HCT116 (cell line): ENCODE measurements at regions of chr6 and their contacts with region 1.

Region 1: DNA sequence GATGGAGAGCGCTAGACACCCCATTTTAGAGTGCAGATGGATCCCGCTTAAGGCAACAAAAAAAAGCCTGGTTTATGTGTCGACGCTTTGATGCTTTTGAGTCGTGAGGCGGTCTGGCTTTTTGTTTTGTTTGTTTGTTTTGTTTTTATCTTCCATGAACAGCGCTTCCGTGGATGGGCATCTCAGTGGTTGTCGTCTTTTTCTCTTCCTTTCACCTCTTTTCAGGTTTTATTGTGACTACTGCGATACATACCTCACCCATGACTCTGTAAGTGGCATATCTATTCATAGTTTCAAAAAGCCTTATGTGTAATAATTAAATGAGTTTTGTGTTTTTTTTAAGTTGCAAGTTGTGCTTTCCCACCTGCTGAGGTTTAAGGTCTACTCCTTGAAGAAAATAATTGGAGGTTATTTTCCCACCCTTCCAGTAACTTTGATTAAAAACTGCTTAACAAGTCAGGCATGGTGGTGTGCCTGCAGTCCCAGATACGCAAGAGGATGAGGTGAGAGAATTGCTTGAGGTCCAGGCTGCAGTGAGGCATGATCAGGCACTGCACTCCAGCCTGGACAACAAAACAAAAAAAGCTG is 476 bp downstream of the SNRPC start:
- DNase-seq: no peak
- ATAC-seq: peak; percentile 16; the same call in 1 of the 2 replicates
- H3K4me3 ChIP-seq: peak overlapping the region; percentile 73 to 98
- H3K27ac ChIP-seq: peak overlapping the region; percentile 87
- H3K4me1 ChIP-seq: peaks cover 4 to 8% of the 10 kb centered on the region in 2 experiments; a peak in 3 of 4 replicates
- H3K27me3 ChIP-seq: no peaks in the 10 kb centered on the region
- CTCF ChIP-seq: no peak
- POLR2A ChIP-seq: no peak
- RAD21 ChIP-seq: no peak

Region 2: GRCh38 chr6:33926451-33926850 is 831.3 kb before region 1 on chr6:
- CTCF ChIA-PET with region 1: no interaction called
- POLR2A ChIA-PET with region 1: no interaction called
- RAD21 ChIA-PET with region 1: no interaction called
- intact Hi-C with region 1: no loop called
- DNase-seq: peak; percentile 52
- ATAC-seq: peak; percentile 96
- H3K4me3 ChIP-seq: no peak overlapping the region
- H3K27ac ChIP-seq: no peak overlapping the region
- H3K4me1 ChIP-seq: peaks cover 0 to 4% of the 10 kb centered on the region in 2 experiments; a peak in 1 of 4 replicates
- H3K27me3 ChIP-seq: no peaks in the 10 kb centered on the region
- CTCF ChIP-seq: no peak
- POLR2A ChIP-seq: no peak
- RAD21 ChIP-seq: no peak

Region 3: GRCh38 chr6:34459899-34460593 is 297.7 kb before region 1 on chr6:
- CTCF ChIA-PET with region 1: no interaction called
- POLR2A ChIA-PET with region 1: no interaction called
- RAD21 ChIA-PET with region 1: no interaction called
- intact Hi-C with region 1: loop called (anchors 1 kb)
- DNase-seq: peak; percentile 70
- ATAC-seq: peak; percentile 56
- H3K4me3 ChIP-seq: no peak overlapping the region
- H3K27ac ChIP-seq: no peak overlapping the region
- H3K4me1 ChIP-seq: peaks cover 8 to 35% of the 10 kb centered on the region in 2 experiments
- H3K27me3 ChIP-seq: no peaks in the 10 kb centered on the region
- CTCF ChIP-seq: peak; percentile 68 to 85 (median 85)
- POLR2A ChIP-seq: no peak
- RAD21 ChIP-seq: peak; percentile 97

Region 4: GRCh38 chr6:34638834-34639736 is 118.7 kb before region 1 on chr6:
- CTCF ChIA-PET with region 1: no interaction called
- POLR2A ChIA-PET with region 1: interaction called, 3 read pairs
- RAD21 ChIA-PET with region 1: no interaction called
- intact Hi-C with region 1: loop called (anchors 10 kb)
- DNase-seq: no peak
- ATAC-seq: no peak
- H3K4me3 ChIP-seq: no peak overlapping the region
- H3K27ac ChIP-seq: no peak overlapping the region
- H3K4me1 ChIP-seq: peaks cover 0 to 11% of the 10 kb centered on the region in 2 experiments; a peak in 3 of 4 replicates
- H3K27me3 ChIP-seq: no peaks in the 10 kb centered on the region
- CTCF ChIP-seq: no peak
- POLR2A ChIP-seq: no peak
- RAD21 ChIP-seq: no peak

Region 5: DNA sequence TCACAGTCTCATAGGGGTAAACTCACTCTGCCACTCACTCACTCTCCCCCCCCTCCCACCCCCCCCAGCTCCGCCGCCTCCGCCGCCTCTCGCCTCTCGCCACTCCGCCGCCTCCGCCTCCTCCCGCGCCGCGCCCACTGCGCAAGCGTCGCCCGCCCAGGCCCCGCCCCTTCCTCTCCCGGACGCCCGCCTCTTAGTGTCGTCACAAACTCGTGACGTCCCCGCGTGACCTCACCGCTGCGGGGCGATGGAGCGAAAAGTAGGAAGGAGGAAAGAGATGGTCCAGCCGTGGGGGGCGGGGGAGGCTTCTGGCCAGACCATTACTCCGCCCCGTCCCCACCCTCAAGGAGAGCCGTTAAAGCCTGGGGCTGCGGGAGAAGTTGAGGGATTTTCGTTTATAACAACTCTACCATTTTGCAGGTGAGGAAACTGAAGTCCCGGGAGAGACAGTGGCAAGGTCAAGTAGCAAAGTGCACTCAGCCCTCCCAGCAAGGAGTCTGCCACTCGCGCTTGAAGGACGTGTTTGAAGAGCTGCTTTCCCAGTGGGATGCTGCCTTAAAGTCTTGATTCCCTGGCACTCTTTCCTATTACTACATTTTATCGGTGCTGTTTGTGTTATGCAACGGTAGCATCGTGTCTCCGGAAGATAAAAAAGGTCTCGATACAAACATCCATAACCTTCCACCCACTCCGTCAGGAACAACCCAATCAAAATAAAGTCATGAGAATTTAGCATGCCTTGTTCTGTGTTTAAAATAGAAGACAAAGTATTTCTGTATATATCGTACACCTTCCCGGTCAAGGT is 60.8 kb before region 1 on chr6 and contains the start of gene ILRUN:
- CTCF ChIA-PET with region 1: no interaction called
- POLR2A ChIA-PET with region 1: interaction called, 3 read pairs
- RAD21 ChIA-PET with region 1: no interaction called
- intact Hi-C with region 1: loop called (anchors 2 kb)
- DNase-seq: peak; percentile 81
- ATAC-seq: peak; percentile 93
- H3K4me3 ChIP-seq: peak within 1 kb of the TSS; percentile 93 to 99
- H3K27ac ChIP-seq: peak within 1 kb of the TSS; percentile 70
- H3K4me1 ChIP-seq: peaks cover 0 to 18% of the 10 kb centered on the region in 2 experiments; a peak in 3 of 4 replicates
- H3K27me3 ChIP-seq: no peaks in the 10 kb centered on the region
- CTCF ChIP-seq: no peak
- POLR2A ChIP-seq: peak; percentile 53
- RAD21 ChIP-seq: no peak
- total RNA-seq, gene ILRUN: 51.9 TPM

Region 6: DNA sequence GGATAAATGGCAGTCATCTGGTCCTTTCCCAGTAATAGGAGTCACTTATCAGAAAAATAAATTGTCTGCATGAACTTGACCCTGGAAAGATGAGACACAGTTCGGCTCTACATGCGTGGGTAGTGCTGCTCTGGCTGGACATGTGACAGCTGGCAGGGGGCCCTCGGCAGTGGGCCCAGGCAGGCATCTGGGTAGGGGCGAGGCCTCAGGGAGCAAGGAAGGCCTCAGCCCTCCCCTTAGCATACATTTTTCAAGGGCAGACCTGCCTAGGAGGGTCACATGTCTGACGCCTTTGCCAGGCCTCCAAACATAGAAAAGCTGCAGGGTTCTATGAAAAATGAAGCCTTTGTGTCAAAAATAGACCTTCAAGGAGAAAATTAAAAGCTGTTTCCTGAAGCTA is 48.4 kb before region 1 on chr6:
- CTCF ChIA-PET with region 1: no interaction called
- POLR2A ChIA-PET with region 1: no interaction called
- RAD21 ChIA-PET with region 1: no interaction called
- intact Hi-C with region 1: no loop called
- DNase-seq: no peak
- ATAC-seq: no peak
- H3K4me3 ChIP-seq: no peak overlapping the region
- H3K27ac ChIP-seq: no peak overlapping the region
- H3K4me1 ChIP-seq: no peaks in the 10 kb centered on the region; a peak in 1 of 4 replicates
- H3K27me3 ChIP-seq: no peaks in the 10 kb centered on the region
- CTCF ChIP-seq: no peak
- POLR2A ChIP-seq: no peak
- RAD21 ChIP-seq: no peak

Region 7: GRCh38 chr6:34887753-34888513 is 130.2 kb after region 1 on chr6 and contains the start of gene TAF11:
- CTCF ChIA-PET with region 1: interaction called, 4 read pairs
- POLR2A ChIA-PET with region 1: interaction called, 4 read pairs
- RAD21 ChIA-PET with region 1: no interaction called
- intact Hi-C with region 1: loop called (anchors 2 kb)
- DNase-seq: peak; percentile 92
- ATAC-seq: peak; percentile 80
- H3K4me3 ChIP-seq: peak within 1 kb of the TSS; percentile 81 to 87
- H3K27ac ChIP-seq: peak within 1 kb of the TSS; percentile 65
- H3K4me1 ChIP-seq: peaks cover 10 to 17% of the 10 kb centered on the region in 2 experiments
- H3K27me3 ChIP-seq: no peaks in the 10 kb centered on the region
- CTCF ChIP-seq: no peak
- POLR2A ChIP-seq: peak; percentile 95
- RAD21 ChIP-seq: no peak
- total RNA-seq, gene TAF11: 23.7 TPM